AG04449 (cell line): ENCODE measurements at regions of chr3 and their contacts with region 1.

Region 1: GRCh38 chr3:184250167-184250828 is 826 bp downstream of the EEF1AKMT4 start:
- DNase-seq: peak; percentile 49
- H3K4me3 ChIP-seq: peak overlapping the region; percentile 87
- CTCF ChIP-seq: peak; percentile 94

Region 2: GRCh38 chr3:184135149-184135910 is 115.0 kb before region 1 on chr3 and contains the start of gene EIF2B5:
- CTCF ChIA-PET with region 1: interaction called, 16 read pairs
- POLR2A ChIA-PET with region 1: no interaction called
- DNase-seq: peak; percentile 69
- H3K4me3 ChIP-seq: peak within 1 kb of the TSS; percentile 96
- CTCF ChIP-seq: peak; percentile 38

Region 3: GRCh38 chr3:184174646-184175492 is 75.4 kb before region 1 on chr3 and contains the start of gene AP2M1:
- CTCF ChIA-PET with region 1: interaction called, 10 read pairs
- POLR2A ChIA-PET with region 1: interaction called, 6 read pairs
- DNase-seq: peak; percentile 95
- H3K4me3 ChIP-seq: peak within 1 kb of the TSS; percentile 99
- CTCF ChIP-seq: no peak

Region 4: GRCh38 chr3:184235381-184236032 is 14.8 kb before region 1 on chr3:
- CTCF ChIA-PET with region 1: interaction called, 22 read pairs
- POLR2A ChIA-PET with region 1: interaction called, 4 read pairs
- DNase-seq: no peak
- H3K4me3 ChIP-seq: no peak overlapping the region
- CTCF ChIP-seq: no peak

Region 5: GRCh38 chr3:184399410-184399809 is 149.1 kb after region 1 on chr3:
- CTCF ChIA-PET with region 1: no interaction called
- POLR2A ChIA-PET with region 1: no interaction called
- DNase-seq: peak; percentile 71
- H3K4me3 ChIP-seq: no peak overlapping the region; the same call in 1 of the 2 replicates
- CTCF ChIP-seq: no peak